ENCODE measurements at regions of chr20 and their contacts with region 1.

Region 1: GRCh38 chr20:59207742-59208357 is 44.2 kb downstream of the ZNF831 start:
- DNase-seq: peak; percentile 62 to 82 (median 78)
- ATAC-seq: peak; percentile 98
- H3K4me3 ChIP-seq: no peak overlapping the region
- H3K4me3 Mint-ChIP-seq: peak overlapping the region in 3 of 10 donors; percentile 8 to 35 (median 12)
- H3K27ac ChIP-seq: no peak overlapping the region
- H3K27ac Mint-ChIP-seq: peak overlapping the region in 8 of 9 donors; percentile 63 to 93 (median 84)
- H3K4me1 ChIP-seq: peaks cover 7 to 18% of the 10 kb centered on the region in 2 donors
- H3K4me1 Mint-ChIP-seq: peaks cover 13 to 47% (median 42%) of the 10 kb centered on the region in 7 donors
- H3K27me3 ChIP-seq: no peaks in the 10 kb centered on the region
- H3K27me3 Mint-ChIP-seq: no peaks in the 10 kb centered on the region

Region 2: GRCh38 chr20:58870239-58871014 is 337.4 kb before region 1 on chr20:
- CTCF ChIA-PET with region 1: interaction called, 10 read pairs
- POLR2A ChIA-PET with region 1: interaction called, 3 read pairs
- intact Hi-C with region 1: loop called in 1 of 2 experiments (anchors 1 kb)
- DNase-seq: peak in 6 of 9 donors; percentile 35 to 63 (median 52)
- ATAC-seq: peak; percentile 84
- H3K4me3 ChIP-seq: no peak overlapping the region
- H3K4me3 Mint-ChIP-seq: no peak overlapping the region
- H3K27ac ChIP-seq: no peak overlapping the region
- H3K27ac Mint-ChIP-seq: peak overlapping the region in 2 of 9 donors; percentile 28 to 62
- H3K4me1 ChIP-seq: no peaks in the 10 kb centered on the region
- H3K4me1 Mint-ChIP-seq: peaks cover 0 to 13% (median 3%) of the 10 kb centered on the region in 7 donors
- H3K27me3 ChIP-seq: peaks cover 0 to 3% of the 10 kb centered on the region in 2 donors
- H3K27me3 Mint-ChIP-seq: peaks cover 0 to 22% (median 0%) of the 10 kb centered on the region in 5 donors

Region 3: GRCh38 chr20:59082077-59082740 is 125.6 kb before region 1 on chr20:
- CTCF ChIA-PET with region 1: interaction called, 97 read pairs
- POLR2A ChIA-PET with region 1: interaction called, 13 read pairs
- intact Hi-C with region 1: no loop called
- DNase-seq: peak in 2 of 9 donors; percentile 5 to 26
- ATAC-seq: no peak
- H3K4me3 ChIP-seq: no peak overlapping the region
- H3K4me3 Mint-ChIP-seq: no peak overlapping the region
- H3K27ac ChIP-seq: no peak overlapping the region
- H3K27ac Mint-ChIP-seq: no peak overlapping the region
- H3K4me1 ChIP-seq: no peaks in the 10 kb centered on the region
- H3K4me1 Mint-ChIP-seq: peaks cover 0 to 4% (median 0%) of the 10 kb centered on the region in 7 donors
- H3K27me3 ChIP-seq: no peaks in the 10 kb centered on the region
- H3K27me3 Mint-ChIP-seq: peaks cover 4 to 43% (median 9%) of the 10 kb centered on the region in 5 donors

Region 4: DNA sequence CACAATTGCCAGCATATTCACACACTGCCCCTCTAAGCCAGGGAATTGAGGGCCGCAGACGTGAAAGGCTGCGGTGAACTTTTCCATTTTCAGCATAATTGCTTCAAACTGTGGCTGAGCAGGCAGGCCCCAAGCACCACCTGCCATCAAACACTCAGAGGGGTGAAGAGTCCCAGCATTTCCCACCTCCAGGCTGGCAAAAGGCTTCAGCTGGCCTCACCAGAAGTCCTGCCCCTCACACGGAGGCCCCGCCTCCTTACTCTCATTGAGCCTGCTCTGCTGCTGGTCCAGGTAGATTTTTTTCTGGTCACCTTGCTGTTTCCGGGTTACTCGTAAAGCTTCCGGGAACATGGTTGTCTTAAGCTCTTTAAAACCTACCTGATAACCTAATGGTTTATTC is 113.3 kb before region 1 on chr20:
- CTCF ChIA-PET with region 1: interaction called, 97 read pairs
- POLR2A ChIA-PET with region 1: interaction called, 3 read pairs
- intact Hi-C with region 1: no loop called
- DNase-seq: no peak
- ATAC-seq: no peak
- H3K4me3 ChIP-seq: no peak overlapping the region
- H3K4me3 Mint-ChIP-seq: no peak overlapping the region
- H3K27ac ChIP-seq: no peak overlapping the region
- H3K27ac Mint-ChIP-seq: peak overlapping the region in 1 of 9 donors; percentile 19
- H3K4me1 ChIP-seq: no peaks in the 10 kb centered on the region
- H3K4me1 Mint-ChIP-seq: peaks cover 0 to 10% (median 5%) of the 10 kb centered on the region in 7 donors
- H3K27me3 ChIP-seq: no peaks in the 10 kb centered on the region
- H3K27me3 Mint-ChIP-seq: peaks cover 0 to 12% (median 0%) of the 10 kb centered on the region in 5 donors

Region 5: GRCh38 chr20:59159493-59160376 is 48.1 kb before region 1 on chr20:
- CTCF ChIA-PET with region 1: interaction called, 17 read pairs
- POLR2A ChIA-PET with region 1: interaction called, 9 read pairs
- intact Hi-C with region 1: loop called in 1 of 2 experiments (anchors 2 kb)
- DNase-seq: peak in 8 of 9 donors; percentile 50 to 86 (median 82)
- ATAC-seq: peak; percentile 93
- H3K4me3 ChIP-seq: peak overlapping the region; percentile 55
- H3K4me3 Mint-ChIP-seq: peak overlapping the region; percentile 76 to 93 (median 89)
- H3K27ac ChIP-seq: peak overlapping the region; percentile 93
- H3K27ac Mint-ChIP-seq: peak overlapping the region; percentile 95 to 99 (median 98)
- H3K4me1 ChIP-seq: peaks cover 55 to 79% of the 10 kb centered on the region in 2 donors
- H3K4me1 Mint-ChIP-seq: peaks cover 49 to 95% (median 89%) of the 10 kb centered on the region in 7 donors
- H3K27me3 ChIP-seq: no peaks in the 10 kb centered on the region
- H3K27me3 Mint-ChIP-seq: no peaks in the 10 kb centered on the region

Region 6: GRCh38 chr20:59177261-59178250 is 30.3 kb before region 1 on chr20:
- CTCF ChIA-PET with region 1: interaction called, 11 read pairs
- POLR2A ChIA-PET with region 1: interaction called, 4 read pairs
- intact Hi-C with region 1: no loop called
- DNase-seq: peak in 4 of 9 donors; percentile 28 to 46 (median 32)
- ATAC-seq: peak; percentile 75
- H3K4me3 ChIP-seq: peak overlapping the region; percentile 32
- H3K4me3 Mint-ChIP-seq: peak overlapping the region; percentile 40 to 83 (median 74)
- H3K27ac ChIP-seq: peak overlapping the region; percentile 71
- H3K27ac Mint-ChIP-seq: peak overlapping the region; percentile 86 to 96 (median 91)
- H3K4me1 ChIP-seq: peaks cover 72 to 81% of the 10 kb centered on the region in 2 donors
- H3K4me1 Mint-ChIP-seq: peaks cover 51 to 97% (median 88%) of the 10 kb centered on the region in 7 donors
- H3K27me3 ChIP-seq: no peaks in the 10 kb centered on the region
- H3K27me3 Mint-ChIP-seq: no peaks in the 10 kb centered on the region

Region 7: GRCh38 chr20:59232618-59233017 is 24.8 kb after region 1 on chr20:
- CTCF ChIA-PET with region 1: no interaction called
- POLR2A ChIA-PET with region 1: no interaction called
- intact Hi-C with region 1: no loop called
- DNase-seq: no peak
- ATAC-seq: no peak
- H3K4me3 ChIP-seq: no peak overlapping the region
- H3K4me3 Mint-ChIP-seq: no peak overlapping the region
- H3K27ac ChIP-seq: no peak overlapping the region
- H3K27ac Mint-ChIP-seq: no peak overlapping the region
- H3K4me1 ChIP-seq: no peaks in the 10 kb centered on the region
- H3K4me1 Mint-ChIP-seq: peaks cover 5 to 23% (median 14%) of the 10 kb centered on the region in 7 donors
- H3K27me3 ChIP-seq: no peaks in the 10 kb centered on the region
- H3K27me3 Mint-ChIP-seq: no peaks in the 10 kb centered on the region